ENCODE measurements at regions of chr9 and their contacts with region 1.

Region 1: GRCh38 chr9:103867886-103868285 is 226.2 kb upstream of the SMC2 start:
- DNase-seq: no peak
- ATAC-seq: no peak
- H3K4me3 Mint-ChIP-seq: no peak overlapping the region
- H3K27ac Mint-ChIP-seq: no peak overlapping the region
- H3K4me1 Mint-ChIP-seq: no peaks in the 10 kb centered on the region
- H3K27me3 Mint-ChIP-seq: no peaks in the 10 kb centered on the region

Region 2: GRCh38 chr9:103798620-103799019 is 69.3 kb before region 1 on chr9:
- CTCF ChIA-PET with region 1: no interaction called
- POLR2A ChIA-PET with region 1: no interaction called
- intact Hi-C with region 1: no loop called
- DNase-seq: peak; percentile 14
- ATAC-seq: peak; percentile 98
- H3K4me3 Mint-ChIP-seq: no peak overlapping the region
- H3K27ac Mint-ChIP-seq: no peak overlapping the region
- H3K4me1 Mint-ChIP-seq: peaks cover 7% of the 10 kb centered on the region
- H3K27me3 Mint-ChIP-seq: peaks cover 4% of the 10 kb centered on the region

Region 3: GRCh38 chr9:103816146-103816545 is 51.7 kb before region 1 on chr9:
- CTCF ChIA-PET with region 1: no interaction called
- POLR2A ChIA-PET with region 1: no interaction called
- intact Hi-C with region 1: loop called in 1 of 2 experiments (anchors 2 kb)
- DNase-seq: no peak
- ATAC-seq: no peak
- H3K4me3 Mint-ChIP-seq: no peak overlapping the region
- H3K27ac Mint-ChIP-seq: no peak overlapping the region
- H3K4me1 Mint-ChIP-seq: no peaks in the 10 kb centered on the region
- H3K27me3 Mint-ChIP-seq: no peaks in the 10 kb centered on the region